HEK293 (cell line): ENCODE measurements at regions of chr2 and their contacts with region 1.

Region 1: DNA sequence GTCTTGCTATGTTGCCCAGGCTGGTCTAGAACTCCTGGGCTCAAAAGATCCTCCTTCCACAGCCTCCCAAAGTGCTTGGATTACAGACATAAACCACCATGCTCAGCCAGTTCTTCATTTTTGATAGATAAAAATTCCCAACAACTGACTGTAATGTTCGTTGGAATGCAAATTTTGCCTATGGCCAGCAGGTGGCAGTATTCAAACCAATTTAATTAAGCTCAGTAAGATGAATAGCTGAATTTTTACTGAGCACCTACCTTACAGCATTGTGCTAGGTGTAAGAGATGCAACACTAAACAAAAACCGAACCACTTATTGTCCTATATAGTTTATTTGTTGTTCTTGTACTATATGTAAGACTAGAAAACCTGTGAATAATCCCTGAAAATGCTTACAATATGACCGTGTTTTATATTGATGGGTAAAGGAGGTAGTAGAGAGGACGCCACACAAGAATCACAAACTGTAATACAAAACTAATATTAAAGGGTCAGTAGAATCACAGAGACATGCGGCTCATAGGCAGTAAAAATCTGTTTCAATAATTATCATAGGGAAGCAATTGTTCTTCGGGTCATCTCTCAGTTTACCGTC is 8.2 kb upstream of the TMEM182 start:
- H3K4me3 ChIP-seq: no peak overlapping the region
- H3K27ac ChIP-seq: no peak overlapping the region
- H3K4me1 ChIP-seq: no peaks in the 10 kb centered on the region
- CTCF ChIP-seq: no peak

Region 2: GRCh38 chr2:102622646-102623045 is 131.0 kb before region 1 on chr2:
- CTCF ChIA-PET with region 1: no interaction called
- POLR2A ChIA-PET with region 1: no interaction called
- H3K4me3 ChIP-seq: no peak overlapping the region
- H3K27ac ChIP-seq: no peak overlapping the region
- H3K4me1 ChIP-seq: no peaks in the 10 kb centered on the region
- CTCF ChIP-seq: no peak

Region 3: GRCh38 chr2:102736410-102737409 is 17.0 kb before region 1 on chr2:
- CTCF ChIA-PET with region 1: interaction called, 12 read pairs
- POLR2A ChIA-PET with region 1: no interaction called
- H3K4me3 ChIP-seq: peak overlapping the region; percentile 92
- H3K27ac ChIP-seq: peak overlapping the region; percentile 58; the same call in 1 of the 2 replicates
- H3K4me1 ChIP-seq: no peaks in the 10 kb centered on the region
- CTCF ChIP-seq: no peak

Region 4: GRCh38 chr2:102773149-102773705 is 19.6 kb after region 1 on chr2:
- CTCF ChIA-PET with region 1: interaction called, 11 read pairs
- POLR2A ChIA-PET with region 1: no interaction called
- H3K4me3 ChIP-seq: no peak overlapping the region
- H3K27ac ChIP-seq: no peak overlapping the region
- H3K4me1 ChIP-seq: no peaks in the 10 kb centered on the region
- CTCF ChIP-seq: no peak

Region 5: GRCh38 chr2:102806250-102806837 is 52.7 kb after region 1 on chr2:
- CTCF ChIA-PET with region 1: interaction called, 49 read pairs
- POLR2A ChIA-PET with region 1: no interaction called
- H3K4me3 ChIP-seq: no peak overlapping the region
- H3K27ac ChIP-seq: no peak overlapping the region
- H3K4me1 ChIP-seq: no peaks in the 10 kb centered on the region
- CTCF ChIP-seq: peak; percentile 61; the same call in 1 of the 2 replicates